CD4-positive, alpha-beta memory T cell (primary cell): ENCODE measurements at regions of chr19 and their contacts with region 1.

Region 1: DNA sequence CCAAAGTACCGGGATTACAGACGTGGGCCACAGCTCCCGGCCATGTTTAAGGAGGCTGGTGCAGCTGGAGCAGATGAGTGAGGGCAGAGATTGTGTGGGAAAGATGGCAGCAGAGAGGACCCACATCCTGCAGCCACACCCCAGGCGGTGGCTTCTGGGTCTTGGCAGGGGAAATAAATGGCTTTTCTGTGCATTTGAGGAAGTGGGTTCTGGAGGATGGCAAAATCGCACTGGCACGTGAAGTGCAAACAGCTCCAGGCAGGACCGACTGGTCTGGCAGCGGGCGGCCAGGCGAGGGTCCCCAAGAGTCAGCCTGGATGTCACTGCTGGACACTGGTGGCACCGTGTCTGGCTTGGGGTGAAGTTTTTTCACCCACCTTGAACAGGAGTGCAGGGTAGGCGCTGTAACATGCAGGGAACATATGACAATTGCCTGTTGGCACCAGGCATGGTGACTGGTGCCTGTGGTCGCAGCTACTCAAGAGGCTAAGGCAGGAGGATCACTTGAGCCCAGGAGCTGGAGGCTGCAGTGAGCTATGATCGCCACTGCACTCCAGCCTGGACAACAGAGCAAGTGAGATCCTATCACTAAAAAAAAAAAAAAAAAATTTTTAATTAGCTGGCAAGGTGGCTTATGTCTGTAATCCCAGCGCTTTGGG is 8.5 kb downstream of the B3GNT3 start:
- DNase-seq: peak; percentile 47 to 63 (median 57)
- H3K4me3 ChIP-seq: peak overlapping the region in 1 of 2 donors; percentile 28
- H3K4me3 Mint-ChIP-seq: peak overlapping the region; percentile 34 to 86 (median 78)
- H3K27ac ChIP-seq: no peak overlapping the region
- H3K27ac Mint-ChIP-seq: peak overlapping the region; percentile 80 to 94 (median 88)
- H3K4me1 ChIP-seq: peaks cover 43% of the 10 kb centered on the region
- H3K4me1 Mint-ChIP-seq: peaks cover 19 to 52% (median 32%) of the 10 kb centered on the region in 4 donors
- H3K27me3 ChIP-seq: no peaks in the 10 kb centered on the region
- H3K27me3 Mint-ChIP-seq: no peaks in the 10 kb centered on the region

Region 2: DNA sequence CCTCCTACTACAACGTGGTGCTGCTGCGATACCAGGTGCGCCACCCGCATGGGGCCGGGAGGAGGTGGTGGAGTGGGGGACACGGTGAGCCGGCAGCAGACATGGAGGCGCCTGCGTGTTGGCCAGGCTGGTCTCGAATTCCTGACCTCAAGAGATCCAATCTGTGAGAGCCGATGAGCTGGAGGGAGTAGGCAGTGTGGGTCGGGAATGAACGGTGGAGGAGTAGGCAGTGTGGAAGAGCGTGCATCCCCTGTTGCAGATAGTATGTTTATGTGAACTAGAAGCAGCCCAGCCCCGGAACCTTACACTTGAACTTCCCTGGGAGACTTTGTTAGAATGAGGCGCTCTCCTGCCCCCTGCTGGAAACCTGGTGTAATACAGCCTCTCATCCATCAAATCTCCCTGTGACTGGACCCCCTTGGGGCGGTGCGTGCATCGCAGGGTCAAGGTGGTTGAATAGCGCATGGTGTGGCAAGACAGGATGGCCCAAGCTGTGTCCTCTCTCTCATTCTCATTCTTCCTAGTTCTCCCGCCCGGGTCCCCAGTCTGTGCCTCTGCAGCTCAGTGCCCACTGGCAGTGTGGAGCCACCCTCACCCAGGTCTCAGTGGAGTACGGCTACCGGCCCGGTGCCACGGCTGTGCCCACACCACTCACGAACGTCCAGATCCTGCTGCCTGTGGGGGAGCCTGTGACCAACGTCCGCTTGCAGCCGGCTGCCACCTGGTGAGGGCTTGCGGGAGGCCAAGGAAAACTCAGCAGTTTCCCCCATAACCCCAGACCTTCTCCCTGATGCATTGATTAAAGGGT is 19.0 kb before region 1 on chr19:
- CTCF ChIA-PET with region 1: interaction called, 28 read pairs
- POLR2A ChIA-PET with region 1: interaction called, 17 read pairs
- intact Hi-C with region 1: no loop called
- DNase-seq: peak; percentile 68 to 72 (median 68)
- H3K4me3 ChIP-seq: no peak overlapping the region
- H3K4me3 Mint-ChIP-seq: peak overlapping the region in 2 of 8 donors; percentile 24 to 49
- H3K27ac ChIP-seq: no peak overlapping the region
- H3K27ac Mint-ChIP-seq: peak overlapping the region in 6 of 7 donors; percentile 0 to 86 (median 67)
- H3K4me1 ChIP-seq: peaks cover 6% of the 10 kb centered on the region
- H3K4me1 Mint-ChIP-seq: peaks cover 7 to 16% (median 15%) of the 10 kb centered on the region in 4 donors
- H3K27me3 ChIP-seq: no peaks in the 10 kb centered on the region
- H3K27me3 Mint-ChIP-seq: no peaks in the 10 kb centered on the region

Region 3: DNA sequence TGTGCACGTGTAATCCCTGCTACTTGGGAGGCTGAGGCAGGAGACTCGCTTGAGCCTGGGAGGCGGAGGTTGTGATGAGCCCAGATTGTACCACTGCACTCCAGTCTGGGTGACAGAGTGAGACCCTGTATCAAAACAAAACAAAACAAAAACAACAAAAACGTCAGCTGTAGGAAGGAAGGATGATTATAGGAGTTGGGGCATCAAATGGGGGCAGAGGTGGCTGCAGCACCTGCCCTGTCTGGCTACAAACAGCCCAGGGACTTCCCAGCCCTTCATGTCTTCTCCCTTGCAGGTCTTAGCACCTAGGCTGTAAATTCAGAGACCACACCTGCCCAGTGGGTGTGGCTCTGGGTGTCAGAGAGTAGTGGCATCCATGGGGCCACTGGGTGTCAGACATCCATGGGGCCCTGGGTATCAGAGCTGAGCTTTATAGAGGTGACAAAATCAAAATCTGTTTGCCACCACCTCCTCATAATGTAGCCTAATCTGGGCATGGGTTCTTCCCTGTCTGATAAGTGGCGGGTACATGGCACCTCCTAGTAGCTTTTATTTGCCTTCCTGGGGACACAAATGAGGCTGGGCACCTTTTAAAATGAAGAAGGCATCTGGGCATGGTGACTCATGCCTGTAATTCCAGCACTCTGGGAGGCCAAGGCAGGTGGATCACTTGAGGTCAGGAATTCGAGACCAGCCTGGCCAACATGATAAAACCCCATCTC is 13.2 kb before region 1 on chr19:
- CTCF ChIA-PET with region 1: interaction called, 28 read pairs
- POLR2A ChIA-PET with region 1: interaction called, 17 read pairs
- intact Hi-C with region 1: no loop called
- DNase-seq: peak in 1 of 5 donors; percentile 32
- H3K4me3 ChIP-seq: no peak overlapping the region
- H3K4me3 Mint-ChIP-seq: peak overlapping the region in 4 of 8 donors; percentile 10 to 49 (median 38)
- H3K27ac ChIP-seq: no peak overlapping the region
- H3K27ac Mint-ChIP-seq: peak overlapping the region; percentile 14 to 85 (median 78)
- H3K4me1 ChIP-seq: peaks cover 33% of the 10 kb centered on the region
- H3K4me1 Mint-ChIP-seq: peaks cover 24 to 52% (median 36%) of the 10 kb centered on the region in 4 donors
- H3K27me3 ChIP-seq: no peaks in the 10 kb centered on the region
- H3K27me3 Mint-ChIP-seq: peaks cover 0 to 3% of the 10 kb centered on the region in 2 donors

Region 4: GRCh38 chr19:17847538-17848366 is 44.4 kb after region 1 on chr19 and contains the start of gene JAK3:
- CTCF ChIA-PET with region 1: interaction called, 20 read pairs
- POLR2A ChIA-PET with region 1: interaction called, 60 read pairs
- intact Hi-C with region 1: loop called (anchors 1 kb)
- DNase-seq: peak; percentile 80 to 91 (median 84)
- H3K4me3 ChIP-seq: peak within 1 kb of the TSS; percentile 52 to 76
- H3K4me3 Mint-ChIP-seq: peak within 1 kb of the TSS; percentile 91 to 98 (median 94)
- H3K27ac ChIP-seq: peak within 1 kb of the TSS; percentile 91
- H3K27ac Mint-ChIP-seq: peak within 1 kb of the TSS; percentile 95 to 98 (median 97)
- H3K4me1 ChIP-seq: peaks cover 76% of the 10 kb centered on the region
- H3K4me1 Mint-ChIP-seq: peaks cover 39 to 80% (median 59%) of the 10 kb centered on the region in 4 donors
- H3K27me3 ChIP-seq: no peaks in the 10 kb centered on the region
- H3K27me3 Mint-ChIP-seq: no peaks in the 10 kb centered on the region
- total RNA-seq, gene JAK3: 132 to 135 TPM

Region 5: GRCh38 chr19:18496167-18496979 is 693.0 kb after region 1 on chr19:
- CTCF ChIA-PET with region 1: no interaction called
- POLR2A ChIA-PET with region 1: no interaction called
- intact Hi-C with region 1: no loop called
- DNase-seq: peak; percentile 75 to 96 (median 83)
- H3K4me3 ChIP-seq: peak overlapping the region; percentile 36 to 43
- H3K4me3 Mint-ChIP-seq: peak overlapping the region; percentile 77 to 86 (median 81)
- H3K27ac ChIP-seq: peak overlapping the region; percentile 90
- H3K27ac Mint-ChIP-seq: peak overlapping the region; percentile 95 to 98 (median 97)
- H3K4me1 ChIP-seq: peaks cover 96% of the 10 kb centered on the region
- H3K4me1 Mint-ChIP-seq: peaks cover 59 to 96% (median 81%) of the 10 kb centered on the region in 4 donors
- H3K27me3 ChIP-seq: no peaks in the 10 kb centered on the region
- H3K27me3 Mint-ChIP-seq: no peaks in the 10 kb centered on the region